Posterior vena cava (tissue), 2 donors: ENCODE measurements at regions of chr16 and their contacts with region 1.

Region 1: DNA sequence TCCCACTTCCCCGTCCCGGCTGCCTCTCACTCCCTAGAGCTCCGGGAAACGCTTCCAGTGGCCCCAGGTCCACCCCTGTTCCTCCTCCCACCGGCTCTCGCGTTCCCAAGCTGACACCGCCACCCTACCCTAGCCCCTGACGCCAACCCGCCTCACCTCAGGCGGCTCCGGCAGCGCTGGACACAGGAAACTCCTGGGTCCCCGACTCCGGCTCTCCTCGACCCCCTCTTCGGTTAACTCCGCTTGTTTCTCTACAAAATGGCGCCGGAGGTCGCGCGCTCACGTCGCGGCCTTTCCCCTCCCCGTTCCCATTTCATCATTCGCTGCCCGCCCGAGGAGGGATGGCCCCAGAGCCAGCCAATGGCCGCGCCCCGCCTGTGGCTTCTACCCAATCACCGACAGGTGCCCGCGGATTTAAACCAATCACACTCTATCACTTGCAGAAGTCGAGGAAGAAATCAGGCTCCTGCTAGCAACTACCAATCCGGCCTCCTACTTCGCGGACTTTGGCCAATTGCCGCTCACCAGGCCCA is at the start of gene CNOT1:
- DNase-seq: peak; percentile 99
- total RNA-seq, gene CNOT1: 102 to 116 TPM

Region 2: GRCh38 chr16:58451945-58452401 is 177.7 kb before region 1 on chr16:
- intact Hi-C with region 1: no loop called
- DNase-seq: no peak

Region 3: GRCh38 chr16:58515125-58515870 is 114.3 kb before region 1 on chr16 and contains the start of gene SETD6:
- intact Hi-C with region 1: loop called in 1 of 2 experiments (anchors 10 kb)
- DNase-seq: peak; percentile 96
- total RNA-seq, gene SETD6: 9.9 to 13.5 TPM

Region 4: DNA sequence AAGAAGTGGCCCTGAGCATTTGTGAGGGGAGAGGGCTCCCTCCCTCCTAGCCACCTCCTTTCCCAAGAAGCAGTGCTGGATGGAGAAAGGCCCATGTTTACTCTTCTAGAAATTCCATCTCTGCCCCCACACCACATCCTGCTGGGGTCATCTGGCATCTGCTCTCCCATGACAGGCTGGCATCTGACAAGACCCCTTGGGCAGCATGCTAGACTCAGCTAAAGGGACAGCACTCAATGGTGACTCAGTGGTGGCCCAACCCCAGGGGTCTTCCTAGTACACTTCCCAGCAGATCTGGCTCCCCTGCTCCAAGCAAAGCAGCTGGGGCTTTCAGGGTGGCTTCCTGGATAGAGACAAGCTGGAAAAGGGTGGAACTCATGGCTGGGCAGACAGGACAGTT is 40.5 kb after region 1 on chr16:
- intact Hi-C with region 1: no loop called
- DNase-seq: no peak